CD4-positive, alpha-beta T cell (primary cell): ENCODE measurements at regions of chr12 and their contacts with region 1.

Region 1: DNA sequence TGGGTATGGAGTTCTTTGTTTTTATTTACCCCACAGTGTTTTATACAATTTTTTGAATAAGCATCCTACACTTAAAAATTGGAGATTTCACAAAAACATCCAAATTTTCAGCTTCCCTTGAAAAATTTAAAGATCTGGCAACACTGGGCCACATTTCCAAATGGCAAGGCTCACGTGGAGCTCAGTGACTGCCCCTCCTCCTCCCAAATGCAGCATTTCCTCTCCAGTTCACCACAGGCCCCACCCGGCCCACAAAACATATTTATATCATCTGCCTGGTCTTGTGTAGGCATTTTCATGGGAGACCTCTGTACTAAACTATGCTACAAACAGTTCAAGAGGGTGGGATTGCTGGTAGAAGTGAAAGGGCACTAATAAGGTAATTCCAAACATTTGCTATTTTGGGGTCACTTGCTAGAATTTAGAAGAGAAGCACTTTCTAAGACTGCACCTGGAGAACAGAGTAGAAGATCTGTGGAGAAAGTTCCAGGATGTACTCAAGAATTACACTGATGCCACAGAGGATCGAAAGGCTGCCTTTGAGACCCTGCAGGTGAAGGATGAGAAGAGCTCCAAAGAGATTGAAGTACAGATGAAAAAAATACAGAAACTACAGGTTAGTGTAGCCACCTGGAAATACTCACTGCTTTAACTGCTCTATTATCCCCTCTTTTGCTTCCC is 7.3 kb downstream of the FKBP11 start:
- DNase-seq: peak; percentile 31 to 79 (median 50)
- ATAC-seq: peak; percentile 96
- H3K4me3 ChIP-seq: peak overlapping the region; percentile 63
- H3K4me3 Mint-ChIP-seq: peak overlapping the region; percentile 91
- H3K27ac ChIP-seq: peak overlapping the region; percentile 19 to 64
- H3K27ac Mint-ChIP-seq: peak overlapping the region; percentile 87
- H3K4me1 ChIP-seq: peaks cover 57% of the 10 kb centered on the region
- H3K4me1 Mint-ChIP-seq: peaks cover 45% of the 10 kb centered on the region
- H3K27me3 ChIP-seq: no peaks in the 10 kb centered on the region
- H3K27me3 Mint-ChIP-seq: no peaks in the 10 kb centered on the region
- CTCF ChIP-seq: no peak

Region 2: DNA sequence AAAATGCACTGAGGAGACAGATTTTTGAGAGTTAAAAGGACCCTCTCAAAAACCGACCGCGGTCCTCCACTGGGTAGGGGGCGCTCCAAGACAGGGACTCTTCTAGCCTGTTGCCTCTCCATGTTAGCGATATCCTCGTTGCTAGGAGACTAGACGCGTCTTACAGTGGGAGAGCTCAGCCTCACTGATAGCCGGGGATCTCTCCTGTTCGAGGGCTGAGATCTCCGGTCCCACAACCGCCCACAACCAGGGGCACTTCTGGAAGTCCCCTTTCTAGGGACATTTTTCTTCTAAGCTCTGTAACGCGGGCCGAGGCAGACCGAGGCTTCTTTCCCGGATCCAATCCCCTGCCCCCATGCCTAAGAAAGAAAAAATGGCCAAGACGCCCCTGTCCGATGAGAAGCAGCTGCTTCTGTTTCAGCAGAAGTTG is 14.0 kb before region 1 on chr12:
- CTCF ChIA-PET with region 1: interaction called, 14 read pairs
- POLR2A ChIA-PET with region 1: interaction called, 5 read pairs
- intact Hi-C with region 1: no loop called
- DNase-seq: peak; percentile 73 to 93 (median 82)
- ATAC-seq: peak; percentile 100
- H3K4me3 ChIP-seq: peak overlapping the region; percentile 37
- H3K4me3 Mint-ChIP-seq: peak overlapping the region; percentile 54
- H3K27ac ChIP-seq: no peak overlapping the region
- H3K27ac Mint-ChIP-seq: no peak overlapping the region
- H3K4me1 ChIP-seq: peaks cover 13% of the 10 kb centered on the region
- H3K4me1 Mint-ChIP-seq: peaks cover 4% of the 10 kb centered on the region
- H3K27me3 ChIP-seq: no peaks in the 10 kb centered on the region
- H3K27me3 Mint-ChIP-seq: peaks cover 5% of the 10 kb centered on the region
- CTCF ChIP-seq: peak; percentile 80

Region 3: DNA sequence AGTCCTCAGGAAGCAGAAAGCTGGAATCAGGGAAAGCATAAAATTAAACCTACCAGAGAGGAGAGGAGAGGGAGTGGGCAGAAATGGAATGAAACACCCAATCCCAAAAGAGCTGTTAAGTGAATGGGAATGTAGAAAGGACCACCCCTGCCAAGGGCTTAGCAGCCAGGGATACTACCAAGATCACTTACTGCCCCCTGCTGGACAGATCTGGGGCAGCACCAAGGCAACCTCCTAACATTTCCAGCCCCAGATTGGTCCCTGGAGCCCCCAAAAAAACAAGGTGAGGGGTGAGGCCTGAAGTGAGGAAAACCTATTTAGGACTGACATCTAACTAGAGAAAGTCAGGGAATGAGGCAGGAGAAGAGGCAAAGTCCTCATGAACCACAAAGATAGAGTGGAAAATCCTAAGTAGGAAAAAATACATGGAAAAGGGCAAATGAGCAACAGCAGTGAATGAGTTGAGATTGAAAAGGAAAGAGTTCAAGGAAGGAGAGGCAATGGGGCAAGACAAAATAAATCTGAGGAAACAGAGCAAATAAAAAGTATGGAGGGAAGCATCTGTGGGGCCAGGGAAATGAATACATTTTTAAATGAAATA is 18.5 kb after region 1 on chr12:
- CTCF ChIA-PET with region 1: interaction called, 3 read pairs
- POLR2A ChIA-PET with region 1: interaction called, 5 read pairs
- intact Hi-C with region 1: loop called in 1 of 2 experiments (anchors 2 kb)
- DNase-seq: peak; percentile 75 to 90 (median 84)
- ATAC-seq: peak; percentile 60
- H3K4me3 ChIP-seq: no peak overlapping the region
- H3K4me3 Mint-ChIP-seq: no peak overlapping the region
- H3K27ac ChIP-seq: no peak overlapping the region
- H3K27ac Mint-ChIP-seq: peak overlapping the region; percentile 32
- H3K4me1 ChIP-seq: peaks cover 55% of the 10 kb centered on the region
- H3K4me1 Mint-ChIP-seq: peaks cover 32% of the 10 kb centered on the region
- H3K27me3 ChIP-seq: no peaks in the 10 kb centered on the region
- H3K27me3 Mint-ChIP-seq: no peaks in the 10 kb centered on the region
- CTCF ChIP-seq: peak; percentile 94